OCI-LY7 (cell line): ENCODE measurements at regions of chr7 and their contacts with region 1.

Region 1: GRCh38 chr7:124072603-124073309 is 39.9 kb upstream of the TMEM229A start:
- DNase-seq: no peak
- H3K4me3 ChIP-seq: no peak overlapping the region
- H3K27ac ChIP-seq: no peak overlapping the region
- H3K4me1 ChIP-seq: no peaks in the 10 kb centered on the region
- CTCF ChIP-seq: no peak

Region 2: DNA sequence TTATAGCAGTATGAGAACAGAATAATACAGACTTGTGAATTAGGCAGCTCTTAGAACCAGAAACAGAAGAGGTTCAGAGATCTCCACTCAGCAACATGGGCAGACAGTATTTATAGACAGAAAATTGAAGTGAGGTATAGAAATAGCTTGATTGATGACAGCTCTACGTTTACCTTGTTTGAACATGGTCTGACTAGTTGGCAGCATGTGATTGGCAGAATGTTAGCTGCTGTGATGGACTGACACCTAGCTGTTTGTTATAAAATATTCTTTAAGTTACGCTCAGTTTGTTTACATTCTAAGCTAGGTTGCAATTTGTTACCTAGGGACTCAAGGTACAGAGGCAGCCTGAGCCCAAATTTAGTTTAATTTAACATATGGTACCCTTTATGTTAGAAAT is 33.8 kb after region 1 on chr7:
- CTCF ChIA-PET with region 1: no interaction called
- POLR2A ChIA-PET with region 1: no interaction called
- intact Hi-C with region 1: loop called (anchors 1 kb)
- DNase-seq: no peak
- H3K4me3 ChIP-seq: no peak overlapping the region
- H3K27ac ChIP-seq: no peak overlapping the region
- H3K4me1 ChIP-seq: no peaks in the 10 kb centered on the region
- CTCF ChIP-seq: no peak

Region 3: DNA sequence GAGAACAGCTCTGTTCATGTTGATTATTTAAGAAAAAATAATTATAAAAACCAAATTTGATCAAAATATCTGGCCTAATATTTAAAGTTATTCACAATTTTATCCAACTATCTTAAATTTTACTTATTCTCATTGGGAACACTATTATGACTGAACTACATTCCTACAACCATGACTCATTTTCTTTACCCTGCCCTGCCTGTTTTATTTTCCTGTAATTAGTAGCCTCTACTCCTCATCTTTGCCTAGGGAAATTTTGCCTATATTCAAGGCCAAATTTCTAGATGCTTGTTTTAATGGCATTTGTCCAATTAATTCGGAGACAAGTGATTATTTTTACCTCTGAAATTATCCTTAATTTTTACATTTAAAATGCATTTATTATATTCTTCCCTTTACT is 249.8 kb after region 1 on chr7:
- CTCF ChIA-PET with region 1: no interaction called
- POLR2A ChIA-PET with region 1: no interaction called
- intact Hi-C with region 1: no loop called
- DNase-seq: no peak
- H3K4me3 ChIP-seq: no peak overlapping the region
- H3K27ac ChIP-seq: no peak overlapping the region
- H3K4me1 ChIP-seq: no peaks in the 10 kb centered on the region
- CTCF ChIP-seq: no peak

Region 4: GRCh38 chr7:124688991-124689390 is 616.2 kb after region 1 on chr7:
- CTCF ChIA-PET with region 1: no interaction called
- POLR2A ChIA-PET with region 1: no interaction called
- intact Hi-C with region 1: no loop called
- DNase-seq: no peak
- H3K4me3 ChIP-seq: no peak overlapping the region
- H3K27ac ChIP-seq: no peak overlapping the region
- H3K4me1 ChIP-seq: no peaks in the 10 kb centered on the region
- CTCF ChIP-seq: no peak